ENCODE measurements at regions of chr7 and their contacts with region 1.

Region 1: GRCh38 chr7:44986218-44987053 is 7.6 kb upstream of the MYO1G start:
- DNase-seq: peak in 1 of 2 donors; percentile 95
- H3K4me3 ChIP-seq: peak overlapping the region; percentile 59 to 67
- H3K27ac ChIP-seq: peak overlapping the region; percentile 95
- H3K4me1 ChIP-seq: peaks cover 38% of the 10 kb centered on the region
- H3K27me3 ChIP-seq: no peaks in the 10 kb centered on the region
- CTCF ChIP-seq: no peak
- POLR2A ChIP-seq: peak in 1 of 2 donors; percentile 94

Region 2: DNA sequence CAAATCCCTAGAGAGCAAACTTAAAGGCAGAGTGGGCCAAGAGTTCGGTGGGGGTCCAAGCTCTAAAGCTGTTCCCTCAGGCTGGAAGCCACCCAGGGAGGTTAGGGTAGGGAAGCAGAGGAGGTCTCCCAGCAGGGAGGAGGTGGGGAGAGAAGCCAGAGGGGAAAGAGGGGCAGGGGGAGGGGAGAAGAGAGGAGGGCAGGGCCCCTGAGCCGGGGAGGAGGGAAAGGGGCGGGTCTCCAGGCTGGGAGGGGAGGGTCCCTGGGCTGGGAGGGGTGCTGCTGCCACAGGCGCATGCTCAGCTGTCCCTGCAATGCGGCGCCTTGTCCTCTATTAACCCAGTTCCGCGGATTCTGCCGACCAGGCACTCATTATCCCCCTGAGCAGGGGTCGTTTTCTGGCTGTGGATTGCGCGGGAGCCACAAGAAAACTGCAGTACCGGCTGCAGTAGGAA is 710.5 kb before region 1 on chr7:
- intact Hi-C with region 1: no loop called
- DNase-seq: no peak
- H3K4me3 ChIP-seq: no peak overlapping the region
- H3K27ac ChIP-seq: no peak overlapping the region
- H3K4me1 ChIP-seq: no peaks in the 10 kb centered on the region
- H3K27me3 ChIP-seq: no peaks in the 10 kb centered on the region
- CTCF ChIP-seq: no peak
- POLR2A ChIP-seq: no peak

Region 3: DNA sequence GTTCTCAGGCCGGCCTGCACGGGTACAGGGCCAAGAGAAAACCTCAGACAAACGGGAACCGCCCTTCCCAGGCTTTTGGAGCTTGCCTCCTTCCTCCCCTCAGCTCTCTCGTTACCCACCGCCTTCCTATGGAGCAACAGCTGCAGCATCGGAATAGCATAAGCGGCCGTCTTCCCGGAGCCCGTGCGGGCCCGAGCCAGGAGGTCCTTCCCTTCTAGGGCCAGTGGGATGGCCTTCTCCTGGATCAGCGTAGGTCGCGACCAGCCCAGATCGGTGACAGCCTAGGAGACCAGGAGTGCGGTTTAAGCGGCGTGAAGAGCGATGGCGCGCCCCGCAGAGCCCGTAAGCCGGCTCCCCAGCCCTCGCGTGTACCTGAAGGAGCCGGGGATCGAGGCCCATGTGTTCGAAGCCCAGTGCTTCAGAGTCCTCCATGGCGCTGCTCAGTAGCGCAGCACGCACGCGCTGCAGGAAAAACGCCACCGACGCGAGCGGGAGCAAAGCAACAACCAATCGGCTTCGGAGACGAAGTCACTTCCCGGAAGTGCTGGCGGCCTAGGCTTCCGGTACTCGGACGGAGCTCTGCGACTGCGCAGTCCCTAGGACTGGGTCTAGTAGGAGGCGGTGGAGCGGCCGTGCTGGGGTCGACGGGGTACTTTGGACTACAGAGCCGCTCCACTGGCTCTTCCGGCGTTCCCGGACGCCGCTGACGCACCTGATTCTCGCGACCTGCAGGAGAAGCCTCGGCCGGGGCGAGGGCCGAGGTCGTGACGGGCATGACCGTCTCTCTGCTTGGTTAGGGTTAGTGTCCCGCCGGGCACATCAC is 412.8 kb before region 1 on chr7 and contains the start of gene DDX56:
- intact Hi-C with region 1: loop called (anchors 10 kb)
- DNase-seq: peak in 1 of 2 donors; percentile 91
- H3K4me3 ChIP-seq: peak within 1 kb of the TSS; percentile 86 to 99
- H3K27ac ChIP-seq: peak within 1 kb of the TSS; percentile 87
- H3K4me1 ChIP-seq: peaks cover 35% of the 10 kb centered on the region
- H3K27me3 ChIP-seq: no peaks in the 10 kb centered on the region
- CTCF ChIP-seq: no peak
- POLR2A ChIP-seq: peak in 1 of 2 donors; percentile 55
- total RNA-seq, gene DDX56: 60.2 TPM

Region 4: DNA sequence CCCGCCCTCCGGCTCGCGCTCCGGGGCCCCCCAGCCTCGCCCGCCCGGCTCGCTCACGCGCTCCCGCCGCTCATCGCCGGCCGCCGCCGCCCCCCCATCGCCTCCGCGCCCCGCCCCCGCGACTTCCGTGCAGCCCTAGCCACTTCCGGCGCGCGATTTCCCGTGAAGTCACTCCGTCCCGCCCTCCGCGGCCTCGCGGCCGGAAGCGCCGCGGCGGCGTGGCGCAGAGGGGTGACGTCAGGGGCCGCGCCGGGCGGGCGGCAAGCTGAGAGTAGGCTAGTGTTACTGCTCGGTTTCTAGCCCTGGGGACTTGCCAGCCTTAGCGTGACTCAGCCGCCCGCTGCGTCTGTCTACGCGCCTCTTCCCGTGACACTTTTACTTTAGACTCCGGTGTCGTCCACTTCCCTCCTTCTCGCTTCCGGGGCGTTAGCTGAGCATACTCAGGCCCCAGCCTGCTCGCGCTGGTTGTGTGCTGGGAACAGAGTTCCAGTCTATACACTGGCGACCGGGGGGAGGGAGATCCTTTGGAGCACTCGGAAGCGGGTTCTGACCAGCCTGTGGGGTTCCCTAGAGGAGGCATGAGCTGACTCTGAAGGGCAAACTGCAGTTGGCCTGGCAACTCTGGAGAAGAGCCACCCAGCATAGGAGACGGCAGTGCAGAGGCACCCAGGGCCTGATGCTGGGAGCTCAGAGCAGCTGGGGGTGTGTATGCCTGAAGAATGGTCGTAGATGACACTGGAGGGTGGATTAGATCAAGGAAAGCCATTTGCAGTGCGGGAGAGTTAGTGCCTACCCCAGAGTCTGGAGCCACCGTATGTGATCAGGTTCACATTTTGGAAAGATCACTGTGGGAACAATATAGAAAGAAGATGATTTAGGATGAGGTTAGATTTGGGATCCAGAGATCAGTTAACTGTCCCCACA is 100.8 kb before region 1 on chr7 and contains the start of gene PURB:
- intact Hi-C with region 1: loop called (anchors 10 kb)
- DNase-seq: peak in 1 of 2 donors; percentile 94
- H3K4me3 ChIP-seq: peak within 1 kb of the TSS; percentile 80 to 96
- H3K27ac ChIP-seq: peak within 1 kb of the TSS; percentile 96
- H3K4me1 ChIP-seq: peaks cover 49% of the 10 kb centered on the region
- H3K27me3 ChIP-seq: no peaks in the 10 kb centered on the region
- CTCF ChIP-seq: peak in 1 of 3 experiments; percentile 6
- POLR2A ChIP-seq: peak; percentile 71 to 93
- total RNA-seq, gene PURB: 19.2 TPM

Region 5: DNA sequence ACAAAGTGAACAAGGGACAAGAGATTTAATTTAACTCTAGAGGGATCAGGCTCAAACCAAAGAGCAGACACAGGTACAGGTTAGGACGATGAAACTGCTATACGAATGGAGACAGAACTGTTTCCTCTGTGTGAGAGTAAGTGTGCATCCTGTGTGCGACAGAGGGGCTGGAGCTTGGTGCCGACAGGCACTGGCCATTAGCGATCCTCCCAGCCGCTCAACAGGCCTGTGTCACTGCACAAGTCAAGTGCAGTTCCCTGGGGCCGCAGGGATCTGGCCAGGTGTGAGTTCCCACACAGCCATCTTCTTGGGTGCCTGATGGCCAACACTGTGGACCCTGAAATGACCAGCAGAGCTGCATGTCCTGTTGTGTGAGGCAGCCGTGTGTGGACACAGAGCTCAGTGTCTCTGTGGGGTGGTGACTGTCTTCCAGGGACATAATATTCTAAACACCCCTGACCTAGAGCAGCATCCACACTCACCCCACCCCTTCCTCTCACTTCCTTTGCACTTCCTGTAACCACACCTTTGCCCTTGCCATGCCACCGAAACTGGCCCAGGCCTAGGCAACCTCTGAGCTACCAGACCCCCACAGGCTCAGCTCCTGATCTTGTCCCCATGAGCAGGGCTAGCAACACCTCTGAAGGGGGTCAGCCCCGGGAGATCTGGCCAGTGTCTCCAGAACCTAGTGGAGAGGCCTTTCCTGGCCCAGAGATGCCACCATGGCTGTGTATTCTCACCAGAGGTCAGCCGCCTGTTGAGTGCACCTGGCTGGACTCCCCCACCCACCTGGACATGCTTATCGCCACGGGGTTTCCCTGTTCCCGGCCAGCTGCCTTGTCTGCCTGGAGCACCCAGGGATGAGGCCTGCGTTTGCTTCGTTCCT is 136.8 kb after region 1 on chr7:
- intact Hi-C with region 1: no loop called
- DNase-seq: no peak
- H3K4me3 ChIP-seq: no peak overlapping the region
- H3K27ac ChIP-seq: no peak overlapping the region
- H3K4me1 ChIP-seq: no peaks in the 10 kb centered on the region
- H3K27me3 ChIP-seq: no peaks in the 10 kb centered on the region
- CTCF ChIP-seq: no peak
- POLR2A ChIP-seq: no peak